Posterior vena cava (tissue), 2 donors: ENCODE measurements at regions of chr6 and their contacts with region 1.

Region 1: GRCh38 chr6:77063494-77063893 is 399.8 kb downstream of the HTR1B start:
- DNase-seq: peak; percentile 72

Region 2: DNA sequence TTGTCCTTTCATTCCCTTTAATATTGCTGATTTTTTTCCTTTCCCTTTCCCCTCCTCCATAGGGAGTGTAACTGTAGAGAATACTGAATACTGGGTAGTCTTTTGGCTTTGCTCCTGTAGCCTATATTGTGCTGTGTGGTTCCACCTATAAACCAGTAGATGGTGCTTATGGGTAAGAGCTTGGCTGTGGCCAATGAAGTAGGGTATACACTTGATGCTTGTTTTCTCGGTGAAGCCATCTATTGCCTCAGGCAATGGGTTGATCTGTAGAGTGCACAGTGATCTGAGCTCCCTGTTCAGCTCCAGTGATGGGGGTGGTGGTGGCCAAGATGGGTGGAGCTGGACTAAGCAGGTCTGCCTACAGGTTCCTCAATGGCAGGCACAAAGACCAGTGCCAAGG is 787.7 kb before region 1 on chr6:
- intact Hi-C with region 1: loop called in 1 of 2 experiments (anchors 5 kb)
- DNase-seq: no peak

Region 3: DNA sequence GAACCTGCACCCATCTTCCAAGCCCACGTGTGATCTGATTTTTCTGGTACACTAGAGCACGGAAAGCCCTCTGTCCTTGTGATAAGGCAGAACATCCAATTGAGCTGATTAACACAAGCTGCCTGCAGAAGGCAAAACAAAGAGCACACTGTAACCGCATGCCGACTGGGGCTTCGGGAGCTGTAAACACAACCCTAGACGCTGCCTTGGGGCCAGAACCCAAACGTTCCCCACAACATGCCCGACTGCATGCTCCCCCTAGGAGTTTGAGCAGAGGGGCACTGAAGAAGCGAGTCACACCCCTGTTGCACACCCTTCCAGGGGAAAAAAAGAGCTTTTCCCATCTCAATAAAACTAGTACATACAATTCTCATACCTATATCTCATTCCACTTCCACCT is 70.9 kb before region 1 on chr6:
- intact Hi-C with region 1: no loop called
- DNase-seq: no peak